Activated CD4-positive, alpha-beta memory T cell treated with anti-CD3 and anti-CD28 coated beads for 36 hours (primary cell): ENCODE measurements at regions of chr3 and their contacts with region 1.

Region 1: DNA sequence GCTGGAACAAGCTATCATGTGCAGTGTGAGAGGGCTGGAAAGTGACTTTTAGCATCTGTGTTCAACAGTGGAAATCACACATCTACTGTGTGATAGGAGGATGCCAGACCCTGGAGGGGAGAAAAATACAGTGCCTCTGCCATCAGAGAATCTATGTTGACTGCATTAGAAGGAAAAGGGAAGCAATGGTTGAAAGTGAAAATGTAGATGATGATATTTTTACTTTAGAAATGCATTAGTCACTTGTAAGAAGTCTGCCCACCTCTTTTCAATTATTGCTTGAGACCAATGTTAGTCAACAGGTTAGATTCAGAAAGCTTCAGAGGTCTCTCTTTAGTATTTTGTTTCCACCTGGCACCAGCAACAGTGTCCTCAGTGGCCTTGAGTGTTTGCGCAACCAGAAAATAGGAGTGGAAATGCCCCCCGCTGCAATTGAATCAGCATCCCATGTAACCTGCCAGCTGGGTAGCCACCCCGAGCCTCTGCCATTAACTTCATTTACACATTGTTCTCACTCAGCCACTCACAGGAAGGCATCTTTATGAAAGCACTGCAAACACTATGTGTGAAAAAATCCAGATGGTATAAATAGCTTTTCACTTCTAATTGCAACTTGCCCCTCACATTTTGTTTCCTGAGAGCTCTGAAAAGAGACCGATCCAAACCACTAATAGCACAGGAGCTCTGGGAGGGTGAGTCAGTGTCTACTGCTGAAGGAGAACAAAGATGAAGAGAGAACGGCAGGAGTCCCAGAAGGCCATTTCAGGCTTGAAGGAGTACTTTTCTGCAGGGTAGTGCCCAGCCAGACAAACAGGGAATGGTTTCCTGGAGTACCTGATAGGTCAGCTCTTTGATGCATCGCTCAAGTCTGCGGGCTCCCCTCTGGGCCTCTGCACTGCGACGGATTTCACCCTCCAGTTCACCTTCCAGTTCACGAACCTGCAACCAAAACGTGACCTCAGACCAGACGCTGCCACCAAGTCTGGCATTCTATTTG is 92.1 kb downstream of the HHLA2 start:
- DNase-seq: peak; percentile 25
- H3K4me3 Mint-ChIP-seq: no peak overlapping the region
- H3K27ac Mint-ChIP-seq: no peak overlapping the region
- H3K4me1 Mint-ChIP-seq: peaks cover 19% of the 10 kb centered on the region
- H3K27me3 Mint-ChIP-seq: peaks cover 16% of the 10 kb centered on the region

Region 2: GRCh38 chr3:108130701-108131474 is 257.5 kb before region 1 on chr3:
- CTCF ChIA-PET with region 1: no interaction called
- POLR2A ChIA-PET with region 1: interaction called, 4 read pairs
- intact Hi-C with region 1: loop called (anchors 5 kb)
- DNase-seq: no peak
- H3K4me3 Mint-ChIP-seq: peak overlapping the region; percentile 33
- H3K27ac Mint-ChIP-seq: peak overlapping the region; percentile 85
- H3K4me1 Mint-ChIP-seq: peaks cover 88% of the 10 kb centered on the region
- H3K27me3 Mint-ChIP-seq: no peaks in the 10 kb centered on the region

Region 3: DNA sequence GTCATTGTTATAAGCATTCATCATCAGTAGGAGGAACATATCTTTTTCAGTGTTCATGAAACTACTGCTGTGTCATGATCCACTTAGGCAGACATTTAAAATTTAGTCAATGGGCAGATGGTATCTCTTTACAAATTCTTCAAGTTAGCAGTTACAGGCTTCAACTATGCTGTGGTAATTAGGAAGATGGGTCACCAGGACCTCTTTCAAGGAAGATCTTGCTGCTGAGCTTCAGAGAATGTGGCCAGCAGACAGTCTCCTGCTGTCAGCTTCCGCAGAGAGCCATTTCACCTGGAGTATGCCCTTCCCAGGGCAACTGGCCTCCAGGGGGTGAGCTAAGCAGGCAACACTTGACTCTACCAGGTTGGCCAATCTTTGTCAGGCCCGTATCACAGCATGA is 185.6 kb before region 1 on chr3:
- CTCF ChIA-PET with region 1: no interaction called
- POLR2A ChIA-PET with region 1: no interaction called
- intact Hi-C with region 1: loop called (anchors 5 kb)
- DNase-seq: no peak
- H3K4me3 Mint-ChIP-seq: no peak overlapping the region
- H3K27ac Mint-ChIP-seq: no peak overlapping the region
- H3K4me1 Mint-ChIP-seq: peaks cover 32% of the 10 kb centered on the region
- H3K27me3 Mint-ChIP-seq: no peaks in the 10 kb centered on the region

Region 4: DNA sequence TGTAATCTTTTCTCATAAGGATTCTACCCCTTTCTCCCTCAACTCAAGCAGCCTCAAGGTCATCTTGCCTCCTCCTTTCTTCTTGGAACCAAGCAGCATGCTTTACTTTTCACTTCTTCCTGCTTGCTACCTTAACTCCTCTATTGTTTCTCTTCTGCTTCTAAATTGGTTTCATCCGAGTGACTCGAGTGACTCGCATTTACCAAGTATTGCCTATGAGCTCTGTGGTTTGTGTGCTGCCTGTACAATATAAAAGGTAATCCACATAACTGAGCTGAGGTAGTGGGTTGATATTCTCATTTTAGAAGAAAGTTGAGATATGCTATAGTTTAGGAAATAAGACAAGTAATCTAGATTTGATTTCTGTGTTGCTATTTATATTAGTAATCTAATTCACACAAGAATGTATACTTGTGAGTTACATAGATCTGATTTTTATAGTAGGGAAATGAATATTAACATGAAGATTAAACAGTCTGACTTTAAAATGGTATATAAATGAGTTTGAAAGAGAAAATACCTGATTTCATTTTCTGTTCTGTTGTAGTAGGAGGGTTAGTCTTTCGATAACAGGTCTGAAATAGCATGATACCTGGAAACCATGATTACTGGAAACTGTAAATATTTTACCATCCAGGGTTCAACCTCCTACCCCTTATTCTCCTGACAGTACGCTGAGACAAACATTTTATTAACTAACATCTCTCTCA is 86.6 kb before region 1 on chr3:
- CTCF ChIA-PET with region 1: no interaction called
- POLR2A ChIA-PET with region 1: no interaction called
- intact Hi-C with region 1: loop called (anchors 1 kb)
- DNase-seq: peak; percentile 32
- H3K4me3 Mint-ChIP-seq: peak overlapping the region; percentile 57
- H3K27ac Mint-ChIP-seq: peak overlapping the region; percentile 72
- H3K4me1 Mint-ChIP-seq: peaks cover 35% of the 10 kb centered on the region
- H3K27me3 Mint-ChIP-seq: no peaks in the 10 kb centered on the region

Region 5: DNA sequence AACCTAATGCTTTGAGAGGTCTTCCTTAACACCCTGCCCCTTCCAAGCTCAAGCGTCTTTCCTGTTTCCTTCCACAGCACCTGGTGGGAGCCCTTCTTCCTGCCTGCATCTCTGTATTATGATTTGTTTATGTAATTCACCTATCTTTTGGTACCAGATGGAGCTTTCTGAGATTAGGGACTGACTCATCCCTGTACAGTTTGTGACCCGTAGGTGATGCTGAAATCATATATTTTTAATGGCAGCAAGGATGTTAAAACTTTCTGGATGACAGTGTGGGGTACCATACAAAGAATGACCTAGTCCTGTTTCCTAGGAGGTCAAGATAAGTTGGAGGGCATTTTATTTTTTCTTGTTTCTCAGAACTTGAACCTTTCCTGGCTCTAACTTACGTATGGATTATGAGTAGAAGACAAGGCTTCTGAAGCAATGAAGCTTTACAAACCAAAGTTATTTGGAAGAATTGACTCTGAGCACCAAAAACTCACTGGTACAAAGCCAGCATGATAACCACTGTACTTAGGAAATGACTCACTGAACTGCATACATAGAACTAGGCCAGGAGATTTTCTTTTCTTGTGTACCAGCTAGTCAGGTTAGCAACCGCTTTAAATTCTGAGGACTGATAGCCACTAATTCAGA is 45.5 kb before region 1 on chr3:
- CTCF ChIA-PET with region 1: interaction called, 6 read pairs
- POLR2A ChIA-PET with region 1: no interaction called
- intact Hi-C with region 1: loop called (anchors 1 kb)
- DNase-seq: peak; percentile 17
- H3K4me3 Mint-ChIP-seq: no peak overlapping the region
- H3K27ac Mint-ChIP-seq: peak overlapping the region; percentile 58
- H3K4me1 Mint-ChIP-seq: peaks cover 13% of the 10 kb centered on the region
- H3K27me3 Mint-ChIP-seq: peaks cover 3% of the 10 kb centered on the region

Region 6: GRCh38 chr3:108378153-108378951 is 10.1 kb before region 1 on chr3:
- CTCF ChIA-PET with region 1: no interaction called
- POLR2A ChIA-PET with region 1: no interaction called
- intact Hi-C with region 1: no loop called
- DNase-seq: no peak
- H3K4me3 Mint-ChIP-seq: no peak overlapping the region
- H3K27ac Mint-ChIP-seq: no peak overlapping the region
- H3K4me1 Mint-ChIP-seq: no peaks in the 10 kb centered on the region
- H3K27me3 Mint-ChIP-seq: no peaks in the 10 kb centered on the region

Region 7: GRCh38 chr3:108416111-108416869 is 27.9 kb after region 1 on chr3:
- CTCF ChIA-PET with region 1: interaction called, 3 read pairs
- POLR2A ChIA-PET with region 1: no interaction called
- intact Hi-C with region 1: loop called (anchors 1 kb)
- DNase-seq: no peak
- H3K4me3 Mint-ChIP-seq: no peak overlapping the region
- H3K27ac Mint-ChIP-seq: no peak overlapping the region
- H3K4me1 Mint-ChIP-seq: peaks cover 12% of the 10 kb centered on the region
- H3K27me3 Mint-ChIP-seq: peaks cover 5% of the 10 kb centered on the region